ENCODE measurements at regions of chr6 and their contacts with region 1.

Region 1: DNA sequence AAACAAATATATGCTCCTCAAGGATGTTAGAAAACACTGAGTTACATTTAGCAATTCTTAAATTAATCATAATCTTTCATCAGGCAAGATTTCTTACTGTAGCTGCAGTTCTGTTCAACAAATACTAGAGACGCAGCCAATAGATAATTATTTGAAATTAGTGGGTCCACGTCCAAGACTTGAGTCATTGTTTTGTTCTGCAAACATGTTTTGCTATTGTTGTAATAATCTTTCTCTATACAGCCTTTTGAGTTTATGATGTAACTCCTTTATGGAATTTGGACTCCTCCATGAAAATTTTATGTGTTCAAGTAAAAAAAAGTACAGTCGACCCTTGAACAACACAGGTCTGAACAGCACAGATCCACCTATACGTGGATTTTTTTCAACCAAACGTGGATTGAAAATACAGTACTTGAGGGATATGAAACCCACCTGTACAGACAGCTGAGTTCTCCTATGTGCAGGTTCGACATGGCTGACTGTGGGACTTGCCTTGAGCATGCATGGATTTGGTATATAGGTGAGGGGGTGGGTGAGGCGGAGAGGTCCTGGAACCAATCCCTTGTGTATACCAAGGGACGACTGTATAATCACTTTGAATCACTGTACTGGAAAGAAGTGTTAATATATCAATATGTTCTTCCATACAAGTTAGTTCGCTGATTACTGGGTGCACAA is 41.3 kb upstream of the SLC22A16 start:
- DNase-seq: no peak
- ATAC-seq: no peak
- H3K4me3 ChIP-seq: no peak overlapping the region
- H3K4me3 Mint-ChIP-seq: no peak overlapping the region
- H3K27ac ChIP-seq: no peak overlapping the region
- H3K27ac Mint-ChIP-seq: no peak overlapping the region
- H3K4me1 ChIP-seq: no peaks in the 10 kb centered on the region
- H3K4me1 Mint-ChIP-seq: no peaks in the 10 kb centered on the region
- H3K27me3 ChIP-seq: peaks cover 0 to 4% of the 10 kb centered on the region in 2 experiments
- H3K27me3 Mint-ChIP-seq: peaks cover 3 to 4% of the 10 kb centered on the region in 2 donors

Region 2: DNA sequence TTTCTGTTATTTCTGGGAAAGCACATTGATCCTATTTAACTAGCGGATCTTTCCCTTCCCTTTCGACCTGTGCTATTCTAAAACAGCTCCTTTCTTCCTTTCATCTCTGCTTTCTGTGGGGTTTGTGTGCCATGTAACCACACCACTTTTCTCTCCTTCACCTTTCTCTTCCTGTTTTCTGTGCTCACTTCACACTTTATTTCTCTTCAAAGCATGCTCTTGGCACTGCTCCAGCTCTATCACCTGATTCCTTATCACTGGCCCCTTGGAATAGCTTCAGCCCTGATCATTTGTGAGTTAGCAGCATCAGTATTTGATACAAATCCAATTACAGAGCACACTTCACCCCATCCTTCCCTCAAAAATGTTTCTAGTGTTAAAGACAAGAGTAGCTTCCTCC is 151.5 kb before region 1 on chr6:
- CTCF ChIA-PET with region 1: interaction called in 1 of 2 experiments, 12 read pairs
- POLR2A ChIA-PET with region 1: no interaction called
- DNase-seq: peak in 5 of 35 experiments; percentile 9 to 30 (median 20)
- ATAC-seq: peak in 3 of 4 experiments; percentile 42 to 48 (median 45)
- H3K4me3 ChIP-seq: no peak overlapping the region
- H3K4me3 Mint-ChIP-seq: peak overlapping the region in 2 of 3 donors; percentile 1 to 52
- H3K27ac ChIP-seq: no peak overlapping the region
- H3K27ac Mint-ChIP-seq: peak overlapping the region; percentile 55 to 84
- H3K4me1 ChIP-seq: peaks cover 20 to 30% of the 10 kb centered on the region in 2 experiments
- H3K4me1 Mint-ChIP-seq: peaks cover 22 to 39% (median 35%) of the 10 kb centered on the region in 3 donors
- H3K27me3 ChIP-seq: no peaks in the 10 kb centered on the region
- H3K27me3 Mint-ChIP-seq: peaks cover 4 to 20% of the 10 kb centered on the region in 2 donors

Measured in T-cell (primary cell).